ENCODE measurements at regions of chr1 and their contacts with region 1.

Region 1: GRCh38 chr1:111754984-111755330 is 744 bp upstream of the DDX20 start:
- DNase-seq: peak; percentile 48
- H3K4me3 ChIP-seq: peak overlapping the region; percentile 90
- H3K27ac ChIP-seq: peak overlapping the region; percentile 88
- H3K4me1 ChIP-seq: peaks cover 7% of the 10 kb centered on the region
- H3K27me3 ChIP-seq: no peaks in the 10 kb centered on the region
- CTCF ChIP-seq: no peak

Region 2: DNA sequence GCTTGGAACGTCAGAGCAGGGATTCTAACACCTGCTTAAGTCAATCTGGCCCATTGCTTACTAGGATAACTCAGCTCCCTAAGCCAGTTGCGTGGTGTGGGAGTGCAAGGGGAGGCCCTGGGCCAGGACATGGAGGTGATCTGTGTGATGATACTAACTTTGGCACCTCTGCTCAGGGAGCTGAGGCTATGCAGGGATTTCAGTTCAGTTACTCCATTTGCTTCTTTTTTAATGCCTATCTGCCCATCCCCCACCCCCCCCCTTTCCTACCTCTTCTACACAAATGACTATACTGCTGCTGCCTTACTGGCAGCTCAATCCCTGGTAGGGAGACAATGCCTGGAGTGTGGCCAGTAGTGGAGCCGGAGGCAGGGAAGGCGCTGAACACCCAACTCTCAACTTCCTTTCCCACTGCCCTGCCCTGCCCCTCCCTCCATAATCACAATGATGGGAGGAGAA is 35.3 kb before region 1 on chr1:
- intact Hi-C with region 1: loop called (anchors 5 kb)
- DNase-seq: no peak
- H3K4me3 ChIP-seq: no peak overlapping the region
- H3K27ac ChIP-seq: no peak overlapping the region
- H3K4me1 ChIP-seq: no peaks in the 10 kb centered on the region
- H3K27me3 ChIP-seq: no peaks in the 10 kb centered on the region
- CTCF ChIP-seq: no peak

Measured in colonic mucosa (tissue), 4 donors.